ENCODE measurements at regions of chr6 and their contacts with region 1.

Region 1: GRCh38 chr6:68634726-68635411 is at the start of gene ADGRB3:
- DNase-seq: peak; percentile 94
- H3K4me3 ChIP-seq: peak within 1 kb of the TSS; percentile 68 to 85 (median 70)
- H3K27ac ChIP-seq: peak within 1 kb of the TSS; percentile 69 to 80 (median 76)
- H3K4me1 ChIP-seq: peaks cover 0 to 28% (median 24%) of the 10 kb centered on the region in 4 donors
- H3K27me3 ChIP-seq: peaks cover 0 to 24% (median 5%) of the 10 kb centered on the region in 4 donors
- CTCF ChIP-seq: peak in 2 of 3 experiments; percentile 9 to 26
- EP300 ChIP-seq: no peak
- POLR2A ChIP-seq: no peak
- total RNA-seq, gene ADGRB3: 4.9 to 6.3 (median 5.8) TPM

Region 2: GRCh38 chr6:68778356-68779020 is 143.6 kb after region 1 on chr6:
- intact Hi-C with region 1: loop called (anchors 5 kb)
- DNase-seq: no peak
- H3K4me3 ChIP-seq: no peak overlapping the region
- H3K27ac ChIP-seq: no peak overlapping the region
- H3K4me1 ChIP-seq: peaks cover 0 to 4% (median 0%) of the 10 kb centered on the region in 4 donors
- H3K27me3 ChIP-seq: no peaks in the 10 kb centered on the region
- CTCF ChIP-seq: peak; percentile 33 to 44 (median 35)
- EP300 ChIP-seq: no peak
- POLR2A ChIP-seq: no peak

Region 3: DNA sequence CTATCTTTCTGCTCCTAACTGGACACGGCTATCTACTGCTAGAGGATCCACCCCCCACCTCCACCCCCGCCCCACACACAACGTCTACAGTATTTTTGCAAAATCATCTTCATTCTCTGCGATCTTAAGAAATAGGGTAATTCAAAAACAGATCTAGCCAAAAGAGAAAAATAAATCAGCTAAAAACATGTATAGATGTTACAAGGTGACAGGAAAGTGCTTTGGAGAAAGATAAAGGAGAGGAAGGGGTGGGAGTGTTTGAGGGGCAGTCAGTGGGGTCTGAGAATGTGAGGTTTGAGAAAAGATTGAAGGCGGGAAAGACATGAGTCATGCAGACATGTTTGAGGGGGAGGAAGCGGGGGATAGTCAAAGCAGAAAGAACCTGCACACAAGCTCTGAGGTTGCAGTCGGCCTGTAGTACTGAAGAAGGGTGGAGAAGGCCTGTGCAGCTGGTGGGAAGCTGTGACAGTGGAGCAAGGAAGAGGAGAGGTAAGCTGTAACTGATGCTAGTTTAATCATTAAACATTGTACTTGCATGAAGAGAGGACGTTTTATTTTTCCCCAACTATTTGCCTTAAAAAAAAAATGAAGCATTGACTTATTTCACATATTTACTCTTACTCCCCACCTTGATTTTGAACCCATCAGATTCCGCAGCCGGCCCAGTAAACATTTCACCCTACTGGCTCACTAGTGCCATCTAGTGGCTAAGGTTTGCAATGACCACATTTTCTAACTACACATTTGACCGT is 332.9 kb after region 1 on chr6:
- intact Hi-C with region 1: loop called (anchors 5 kb)
- DNase-seq: no peak
- H3K4me3 ChIP-seq: no peak overlapping the region
- H3K27ac ChIP-seq: no peak overlapping the region
- H3K4me1 ChIP-seq: peaks cover 0 to 3% (median 0%) of the 10 kb centered on the region in 4 donors
- H3K27me3 ChIP-seq: no peaks in the 10 kb centered on the region
- CTCF ChIP-seq: peak; percentile 64 to 89 (median 72)
- EP300 ChIP-seq: no peak
- POLR2A ChIP-seq: no peak

Measured in esophagus muscularis mucosa (tissue), 4 donors.